ENCODE measurements at regions of chr10 and their contacts with region 1.

Region 1: DNA sequence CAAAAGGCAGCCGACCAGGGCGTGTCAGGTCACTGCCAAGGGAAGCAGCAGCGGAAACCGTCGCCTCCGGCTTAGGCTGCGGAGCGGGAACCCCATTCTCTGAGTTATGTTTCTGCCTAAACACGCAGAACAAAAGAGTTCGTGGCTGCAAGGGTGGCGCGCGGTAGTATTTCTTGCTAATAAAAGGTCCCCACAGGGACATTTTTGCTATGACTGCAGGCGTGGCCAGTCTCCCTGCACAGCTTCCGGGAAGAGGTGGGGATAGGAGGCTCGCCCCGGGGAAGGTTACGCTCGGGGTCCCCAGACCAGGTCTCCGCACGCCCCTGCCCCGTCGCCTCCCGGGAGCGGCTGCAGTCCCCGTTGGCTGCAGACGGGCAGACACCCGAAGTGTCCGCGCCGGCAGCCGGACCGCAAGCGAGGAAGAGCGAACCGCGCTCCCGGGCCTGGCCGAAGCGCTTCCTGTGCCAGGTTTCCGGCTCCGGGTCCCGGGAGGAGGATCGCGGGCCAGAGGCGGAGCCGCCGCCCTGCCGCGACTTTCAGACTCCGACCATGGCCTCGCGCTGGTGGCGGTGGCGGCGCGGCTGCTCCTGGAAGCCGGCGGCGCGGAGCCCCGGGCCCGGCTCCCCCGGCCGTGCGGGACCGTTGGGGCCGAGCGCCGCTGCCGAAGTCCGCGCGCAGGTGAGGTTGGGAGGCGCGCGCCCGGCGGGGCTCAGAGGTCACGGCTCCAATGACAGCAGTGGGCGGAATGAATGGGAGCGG is at the start of gene PDSS1:
- DNase-seq: peak; percentile 79
- H3K4me3 ChIP-seq: peak within 1 kb of the TSS; percentile 93
- H3K27ac ChIP-seq: peak within 1 kb of the TSS; percentile 97
- H3K4me1 ChIP-seq: peaks cover 18% of the 10 kb centered on the region
- H3K27me3 ChIP-seq: no peaks in the 10 kb centered on the region
- CTCF ChIP-seq: no peak
- total RNA-seq, gene PDSS1: 46.8 and 55.4 TPM in 2 replicates

Region 2: GRCh38 chr10:26665080-26666048 is 32.0 kb before region 1 on chr10:
- CTCF ChIA-PET with region 1: no interaction called
- POLR2A ChIA-PET with region 1: interaction called, 12 read pairs
- intact Hi-C with region 1: no loop called
- DNase-seq: no peak
- H3K4me3 ChIP-seq: no peak overlapping the region
- H3K27ac ChIP-seq: peak overlapping the region; percentile 46
- H3K4me1 ChIP-seq: peaks cover 6% of the 10 kb centered on the region
- H3K27me3 ChIP-seq: no peaks in the 10 kb centered on the region
- CTCF ChIP-seq: no peak